Endothelial cell of umbilical vein (primary cell): ENCODE measurements at regions of chr4 and their contacts with region 1.

Region 1: DNA sequence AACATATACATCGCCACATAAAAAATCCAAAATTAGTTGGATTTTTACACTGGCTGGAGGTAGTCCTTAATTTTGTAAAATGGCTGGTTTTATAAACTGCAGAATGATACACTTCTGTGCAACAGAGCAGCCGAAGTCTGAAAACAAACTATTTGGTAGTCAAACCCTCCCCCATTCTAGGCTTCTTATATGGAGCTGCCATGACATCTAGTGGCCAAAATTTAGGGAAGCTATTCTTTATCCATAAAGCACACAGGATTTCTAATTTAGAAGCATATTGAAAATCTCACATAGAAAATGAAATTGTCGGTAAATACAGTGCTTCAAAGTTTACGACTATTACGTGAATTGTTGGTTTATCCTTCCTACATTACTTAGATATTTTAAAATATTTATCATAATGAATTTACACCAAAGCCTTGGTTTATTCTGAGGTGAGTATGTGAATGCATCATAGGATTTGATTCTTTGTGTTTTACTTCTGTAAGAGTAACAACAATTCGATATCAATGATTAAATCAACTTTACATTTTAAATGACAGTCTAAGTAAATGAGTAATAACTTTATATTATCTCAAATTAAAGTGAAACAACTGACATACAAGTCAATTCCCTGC is 113.4 kb upstream of the FAM241A start:
- DNase-seq: peak; percentile 51
- H3K4me3 ChIP-seq: no peak overlapping the region
- H3K27ac ChIP-seq: no peak overlapping the region
- H3K4me1 ChIP-seq: no peaks in the 10 kb centered on the region
- H3K27me3 ChIP-seq: peaks cover 12 to 36% of the 10 kb centered on the region in 2 experiments
- CTCF ChIP-seq: peak; percentile 39 to 43
- POLR2A ChIP-seq: no peak

Region 2: GRCh38 chr4:110631584-110632505 is 1400.0 kb before region 1 on chr4:
- CTCF ChIA-PET with region 1: interaction called, 3 read pairs
- POLR2A ChIA-PET with region 1: no interaction called
- dilution Hi-C with region 1: no loop called
- intact Hi-C with region 1: loop called (anchors 1 kb)
- DNase-seq: peak; percentile 76
- H3K4me3 ChIP-seq: peak overlapping the region in 1 of 3 experiments; percentile 27
- H3K27ac ChIP-seq: no peak overlapping the region
- H3K4me1 ChIP-seq: no peaks in the 10 kb centered on the region
- H3K27me3 ChIP-seq: peaks cover 91 to 92% of the 10 kb centered on the region in 2 experiments
- CTCF ChIP-seq: peak; percentile 84 to 91
- POLR2A ChIP-seq: no peak

Region 3: DNA sequence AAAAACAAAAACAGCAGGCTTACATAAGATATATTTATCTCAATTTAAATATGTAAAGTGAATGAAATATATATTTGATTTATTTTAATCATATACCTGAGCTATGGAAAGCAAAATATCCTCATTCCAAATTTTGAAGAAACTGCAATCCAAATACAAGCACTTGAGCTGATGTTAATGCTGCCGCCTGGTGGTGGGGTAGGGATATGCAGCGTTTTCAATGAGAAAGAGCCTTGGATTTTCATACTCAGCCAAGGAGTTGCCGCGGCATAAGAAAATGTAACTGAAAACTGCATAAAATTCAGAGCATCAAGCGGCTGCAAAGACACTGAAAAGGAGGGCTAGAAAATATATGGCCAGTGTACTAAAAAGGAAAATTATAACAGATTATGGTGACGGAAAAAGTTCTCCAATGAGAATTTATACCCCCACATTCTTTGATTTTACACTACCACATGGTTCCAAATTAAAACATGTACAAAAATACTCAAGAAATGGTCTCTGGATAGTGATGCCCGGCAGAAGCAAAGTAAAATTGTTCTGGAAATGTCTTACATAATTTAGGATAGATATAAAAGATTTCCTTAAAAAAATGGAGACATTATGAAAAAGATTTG is 748.7 kb before region 1 on chr4:
- CTCF ChIA-PET with region 1: interaction called, 8 read pairs
- POLR2A ChIA-PET with region 1: no interaction called
- dilution Hi-C with region 1: no loop called
- intact Hi-C with region 1: loop called (anchors 2 kb)
- DNase-seq: peak; percentile 58
- H3K4me3 ChIP-seq: no peak overlapping the region
- H3K27ac ChIP-seq: no peak overlapping the region
- H3K4me1 ChIP-seq: no peaks in the 10 kb centered on the region
- H3K27me3 ChIP-seq: no peaks in the 10 kb centered on the region
- CTCF ChIP-seq: peak; percentile 77 to 85
- POLR2A ChIP-seq: no peak

Region 4: GRCh38 chr4:111641955-111642579 is 389.8 kb before region 1 on chr4:
- CTCF ChIA-PET with region 1: interaction called, 43 read pairs
- POLR2A ChIA-PET with region 1: no interaction called
- dilution Hi-C with region 1: no loop called
- intact Hi-C with region 1: loop called (anchors 1 kb)
- DNase-seq: peak; percentile 86
- H3K4me3 ChIP-seq: no peak overlapping the region
- H3K27ac ChIP-seq: no peak overlapping the region
- H3K4me1 ChIP-seq: peaks cover 3% of the 10 kb centered on the region
- H3K27me3 ChIP-seq: no peaks in the 10 kb centered on the region
- CTCF ChIP-seq: peak; percentile 80 to 89
- POLR2A ChIP-seq: no peak

Region 5: GRCh38 chr4:111943795-111944203 is 88.0 kb before region 1 on chr4:
- CTCF ChIA-PET with region 1: interaction called, 75 read pairs
- POLR2A ChIA-PET with region 1: no interaction called
- dilution Hi-C with region 1: no loop called
- intact Hi-C with region 1: loop called (anchors 1 kb)
- DNase-seq: peak; percentile 30
- H3K4me3 ChIP-seq: no peak overlapping the region
- H3K27ac ChIP-seq: no peak overlapping the region
- H3K4me1 ChIP-seq: no peaks in the 10 kb centered on the region
- H3K27me3 ChIP-seq: peaks cover 2 to 3% of the 10 kb centered on the region in 2 experiments
- CTCF ChIP-seq: peak in 1 of 2 donors; percentile 41
- POLR2A ChIP-seq: no peak

Region 6: DNA sequence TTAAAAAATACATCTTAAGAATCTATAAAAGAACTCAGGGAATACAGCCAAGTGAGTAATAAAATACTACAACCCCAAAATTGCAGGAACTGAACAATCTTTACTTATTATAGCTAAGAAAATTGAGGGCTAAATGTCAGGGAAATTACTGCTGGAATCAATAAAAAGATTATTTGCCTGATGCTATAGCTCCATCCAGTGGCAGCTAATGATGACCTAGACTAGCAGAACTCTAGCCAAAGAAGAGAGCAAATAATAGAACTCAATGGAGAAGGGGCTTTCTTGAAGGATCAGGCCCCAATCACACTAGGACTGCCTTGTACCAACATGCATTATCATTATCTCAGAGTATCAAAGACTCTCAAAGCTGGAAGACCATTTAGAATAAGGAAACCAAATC is 28.4 kb after region 1 on chr4:
- CTCF ChIA-PET with region 1: interaction called, 25 read pairs
- POLR2A ChIA-PET with region 1: no interaction called
- dilution Hi-C with region 1: no loop called
- intact Hi-C with region 1: no loop called
- DNase-seq: peak; percentile 59
- H3K4me3 ChIP-seq: no peak overlapping the region
- H3K27ac ChIP-seq: no peak overlapping the region
- H3K4me1 ChIP-seq: peaks cover 9% of the 10 kb centered on the region
- H3K27me3 ChIP-seq: no peaks in the 10 kb centered on the region
- CTCF ChIP-seq: peak; percentile 45 to 58
- POLR2A ChIP-seq: no peak